HEK293 (cell line): ENCODE measurements at regions of chr3 and their contacts with region 1.

Region 1: GRCh38 chr3:49539659-49540560 is 14.4 kb upstream of the BSN start:
- H3K4me3 ChIP-seq: peak overlapping the region; percentile 48
- H3K27ac ChIP-seq: peak overlapping the region; percentile 47
- H3K4me1 ChIP-seq: no peaks in the 10 kb centered on the region
- CTCF ChIP-seq: peak; percentile 75

Region 2: GRCh38 chr3:49454458-49454857 is 85.5 kb before region 1 on chr3:
- CTCF ChIA-PET with region 1: interaction called, 10 read pairs
- POLR2A ChIA-PET with region 1: no interaction called
- H3K4me3 ChIP-seq: no peak overlapping the region
- H3K27ac ChIP-seq: no peak overlapping the region
- H3K4me1 ChIP-seq: no peaks in the 10 kb centered on the region
- CTCF ChIP-seq: peak; percentile 14; the same call in 1 of the 2 replicates

Region 3: GRCh38 chr3:49553692-49554632 is 14.1 kb after region 1 on chr3 and contains the start of gene BSN:
- CTCF ChIA-PET with region 1: interaction called, 24 read pairs
- POLR2A ChIA-PET with region 1: interaction called, 4 read pairs
- H3K4me3 ChIP-seq: peak within 1 kb of the TSS; percentile 45
- H3K27ac ChIP-seq: peak within 1 kb of the TSS; percentile 42; the same call in 1 of the 2 replicates
- H3K4me1 ChIP-seq: no peaks in the 10 kb centered on the region
- CTCF ChIP-seq: no peak

Region 4: GRCh38 chr3:49673715-49674496 is 134.0 kb after region 1 on chr3 and contains the start of gene APEH:
- CTCF ChIA-PET with region 1: interaction called, 104 read pairs
- POLR2A ChIA-PET with region 1: interaction called, 14 read pairs
- H3K4me3 ChIP-seq: peak within 1 kb of the TSS; percentile 89
- H3K27ac ChIP-seq: peak within 1 kb of the TSS; percentile 72
- H3K4me1 ChIP-seq: no peaks in the 10 kb centered on the region
- CTCF ChIP-seq: no peak

Region 5: DNA sequence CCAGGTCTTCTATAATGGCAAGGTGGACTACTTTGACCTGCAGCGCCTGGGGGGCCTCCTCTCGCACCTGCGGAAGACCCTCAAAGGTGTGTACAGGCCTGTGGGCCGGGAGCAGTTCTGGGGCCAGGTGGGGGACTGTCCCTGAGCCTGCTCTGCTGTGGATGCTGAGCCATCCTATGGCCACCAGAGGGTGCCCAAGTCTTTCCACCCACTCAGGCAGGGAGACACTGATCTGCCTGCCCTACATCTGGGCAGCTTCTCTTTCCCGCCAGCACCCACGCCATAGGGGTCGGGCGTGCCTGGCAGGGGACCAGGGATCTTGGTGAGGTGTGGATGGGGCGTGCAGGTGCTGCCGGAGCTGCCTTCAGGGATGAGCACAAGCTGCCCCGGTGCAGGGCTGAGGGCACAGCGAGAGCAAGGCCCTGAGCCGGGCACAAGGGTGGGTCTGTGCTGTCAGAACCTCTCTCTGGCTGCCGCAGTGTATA is 163.6 kb after region 1 on chr3:
- CTCF ChIA-PET with region 1: interaction called, 17 read pairs
- POLR2A ChIA-PET with region 1: no interaction called
- H3K4me3 ChIP-seq: no peak overlapping the region
- H3K27ac ChIP-seq: no peak overlapping the region
- H3K4me1 ChIP-seq: no peaks in the 10 kb centered on the region
- CTCF ChIP-seq: peak; percentile 84